ENCODE measurements at regions of chr1 and their contacts with region 1.

Region 1: DNA sequence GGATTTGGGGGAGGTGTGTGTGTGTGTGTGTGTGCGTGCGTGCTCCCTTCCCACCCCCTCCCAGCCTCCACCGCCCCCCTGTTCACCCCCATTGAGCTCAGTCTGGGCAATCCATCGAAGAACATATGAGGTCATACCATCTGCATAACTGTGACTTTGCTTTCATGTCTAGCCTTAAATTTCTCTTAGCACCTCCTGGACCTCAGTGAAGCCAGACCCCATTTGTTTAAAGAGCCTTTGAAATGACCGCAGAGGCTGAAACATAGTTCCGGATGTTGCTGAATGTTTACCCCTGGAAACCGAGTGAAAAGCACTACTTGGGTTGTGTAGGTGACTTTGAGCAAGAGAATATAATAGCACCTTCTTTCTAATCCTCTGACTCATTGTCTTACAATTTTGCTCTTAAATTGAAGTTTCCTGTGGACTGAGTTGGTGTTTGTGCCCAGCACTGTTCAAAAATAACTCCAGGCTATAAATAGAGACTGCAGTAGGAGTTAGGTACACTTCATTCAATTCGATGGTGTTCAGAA is 75.4 kb downstream of the UBE4B start:
- DNase-seq: no peak

Region 2: GRCh38 chr1:9960706-9961562 is 147.3 kb before region 1 on chr1:
- intact Hi-C with region 1: no loop called
- DNase-seq: no peak

Region 3: DNA sequence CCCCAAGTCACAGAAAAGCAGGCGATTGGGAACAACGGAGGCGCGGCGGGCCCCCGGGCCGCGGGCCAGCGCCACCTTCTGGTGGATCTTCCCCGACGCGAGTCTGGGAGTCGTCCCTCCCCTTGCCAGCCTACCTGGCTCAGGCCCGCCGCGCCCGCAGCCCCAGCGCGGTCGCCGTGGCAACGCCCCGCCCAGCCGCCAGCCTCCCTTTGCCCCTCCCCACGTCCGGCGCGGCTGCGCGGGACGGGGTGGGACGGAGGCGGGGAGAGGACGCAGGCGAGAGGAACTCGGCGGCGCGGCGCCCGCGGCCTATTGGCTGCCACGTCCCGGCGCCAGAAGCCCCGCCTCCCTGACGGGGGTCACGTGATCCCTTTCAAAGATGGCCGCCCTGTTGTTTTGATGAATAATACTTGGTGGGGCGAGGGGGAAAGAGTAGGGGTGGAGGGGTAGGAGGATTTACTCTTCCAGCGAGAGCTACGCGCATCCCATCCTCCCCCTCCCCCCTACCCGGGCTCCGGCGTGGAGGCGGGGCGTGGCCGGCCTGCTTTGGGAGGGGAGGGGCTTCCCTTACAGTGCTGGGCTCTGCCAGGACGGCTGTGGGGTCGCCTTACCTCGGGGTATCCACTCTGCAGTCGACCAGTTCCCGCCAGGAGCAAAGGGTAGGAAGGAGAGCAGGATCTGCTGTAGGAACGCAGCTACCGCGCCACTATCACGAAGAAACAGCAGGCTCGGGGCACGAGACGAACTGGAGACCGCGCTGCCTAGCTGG is 75.4 kb before region 1 on chr1 and contains the start of gene UBE4B:
- intact Hi-C with region 1: loop called (anchors 5 kb)
- DNase-seq: peak; percentile 99
- total RNA-seq, gene UBE4B: 62.1 TPM